GM10248 (cell line): ENCODE measurements at regions of chr14 and their contacts with region 1.

Region 1: DNA sequence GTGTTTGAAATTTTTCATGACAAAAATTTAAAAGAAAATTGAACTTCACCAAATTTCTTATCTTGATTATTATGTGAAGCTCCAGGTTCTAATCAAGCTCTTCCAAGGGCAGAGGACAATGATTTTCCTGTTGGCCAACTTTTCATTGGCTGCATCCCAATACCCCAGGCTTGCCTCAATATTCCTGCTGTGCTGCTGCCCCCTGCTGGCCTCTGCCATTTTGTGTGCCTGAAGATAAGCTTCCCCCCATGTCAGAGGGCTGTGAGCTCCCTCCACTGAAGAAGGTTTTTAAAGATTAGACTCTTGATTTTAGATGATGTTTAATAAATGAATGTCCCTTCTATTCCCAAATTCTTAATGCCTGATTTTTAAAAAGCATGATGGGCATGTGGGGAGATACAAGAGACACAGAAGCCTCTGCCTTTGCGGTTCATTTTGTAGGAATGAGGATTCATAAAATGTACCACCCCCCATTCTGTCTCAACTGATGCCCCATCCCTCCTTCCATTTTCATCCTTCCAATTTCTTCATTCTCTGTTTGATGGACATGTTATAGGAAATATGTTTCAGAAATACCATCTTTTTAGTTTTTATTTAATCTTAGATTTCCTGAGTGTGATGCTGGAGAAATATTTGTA is 76.7 kb upstream of the RGS6 start:
- DNase-seq: peak; percentile 65
- CTCF ChIP-seq: peak; percentile 85

Region 2: DNA sequence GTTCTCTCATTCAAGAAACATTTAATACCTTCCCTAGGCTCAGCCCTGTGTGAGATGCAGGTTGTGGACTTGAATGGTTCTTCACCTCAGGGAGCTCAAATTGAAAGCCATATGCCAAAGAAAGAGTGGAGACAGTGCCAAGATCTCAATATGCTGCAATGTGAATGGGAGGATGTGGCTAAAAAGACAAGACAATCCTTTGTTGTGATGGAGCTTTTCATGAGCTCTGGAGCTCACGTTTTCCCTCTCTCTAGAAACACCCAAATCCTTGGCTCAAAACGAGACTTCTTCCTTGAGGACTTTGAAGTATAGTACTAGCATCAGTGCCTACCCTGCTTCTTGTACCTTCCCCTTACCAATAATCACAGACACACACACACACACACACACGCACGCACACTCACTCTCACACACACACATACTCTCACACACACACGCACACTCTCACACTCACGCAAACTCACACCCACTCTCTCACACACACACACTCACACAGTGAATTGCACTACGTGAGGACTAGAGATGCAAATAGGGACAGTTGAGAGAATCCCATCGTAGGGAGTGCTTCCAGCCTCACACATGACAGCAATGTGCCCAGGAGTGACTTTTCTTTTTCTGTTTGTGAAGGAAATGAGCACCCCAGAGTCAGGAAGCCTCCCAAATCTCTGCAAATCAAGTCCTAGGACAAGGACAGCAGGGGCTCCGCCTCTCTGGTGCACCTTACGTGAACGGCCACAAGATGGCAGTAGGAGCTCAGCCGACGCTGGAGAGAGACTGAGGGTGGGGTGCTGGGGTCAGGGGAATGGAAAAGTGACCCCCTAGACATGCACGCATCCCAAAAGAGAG is 716.8 kb before region 1 on chr14:
- CTCF ChIA-PET with region 1: interaction called, 33 read pairs
- POLR2A ChIA-PET with region 1: no interaction called
- DNase-seq: peak; percentile 78
- CTCF ChIP-seq: peak; percentile 91

Region 3: GRCh38 chr14:71833476-71833875 is 22.0 kb before region 1 on chr14:
- CTCF ChIA-PET with region 1: interaction called, 17 read pairs
- POLR2A ChIA-PET with region 1: no interaction called
- DNase-seq: no peak
- CTCF ChIP-seq: no peak

Region 4: DNA sequence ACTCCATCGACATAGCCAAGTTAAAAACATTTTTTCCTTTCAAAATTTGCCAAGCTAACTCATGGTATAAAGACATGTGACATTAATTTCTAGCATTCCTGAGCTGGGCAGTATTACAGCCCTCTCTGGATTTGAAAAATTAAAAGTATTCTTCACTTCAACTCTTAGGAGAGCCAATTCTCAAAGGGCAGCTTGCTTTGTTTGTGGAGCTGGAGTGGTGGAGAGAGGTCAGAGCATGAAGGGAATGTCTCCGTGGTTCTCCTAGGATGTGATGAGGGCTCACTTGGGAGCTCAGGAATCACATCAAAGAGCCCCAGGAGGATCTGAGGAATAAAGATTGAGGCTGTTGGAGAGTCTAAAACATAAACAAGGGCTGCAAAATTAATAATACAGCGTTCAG is 29.8 kb after region 1 on chr14:
- CTCF ChIA-PET with region 1: interaction called, 10 read pairs
- POLR2A ChIA-PET with region 1: no interaction called
- DNase-seq: no peak
- CTCF ChIP-seq: no peak